CD8-positive, alpha-beta T cell (primary cell): ENCODE measurements at regions of chr12 and their contacts with region 1.

Region 1: DNA sequence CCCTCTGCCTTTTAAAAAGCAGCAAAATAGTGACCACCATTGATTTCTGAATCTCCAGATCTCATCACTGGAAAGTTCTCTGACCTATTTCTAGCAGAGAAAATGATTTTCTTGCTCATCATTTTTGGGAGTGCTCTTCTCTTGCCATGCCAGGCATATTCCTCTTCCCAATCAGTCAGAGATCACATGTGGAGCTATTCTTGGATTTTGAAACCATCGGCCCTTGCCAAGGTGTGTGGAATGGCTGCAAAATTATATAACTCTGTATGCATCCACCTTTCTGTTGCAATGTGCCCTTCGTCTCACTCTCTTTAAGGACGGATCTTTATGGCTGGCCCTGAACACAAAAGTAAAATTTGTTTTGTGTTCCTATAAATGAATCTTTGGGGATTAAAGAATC is 25.5 kb upstream of the LDHB start:
- DNase-seq: no peak
- ATAC-seq: no peak
- H3K4me3 ChIP-seq: no peak overlapping the region
- H3K4me3 Mint-ChIP-seq: no peak overlapping the region
- H3K27ac ChIP-seq: no peak overlapping the region
- H3K27ac Mint-ChIP-seq: no peak overlapping the region
- H3K4me1 ChIP-seq: peaks cover 22% of the 10 kb centered on the region
- H3K4me1 Mint-ChIP-seq: peaks cover 23% of the 10 kb centered on the region
- H3K27me3 ChIP-seq: no peaks in the 10 kb centered on the region
- H3K27me3 Mint-ChIP-seq: peaks cover 2% of the 10 kb centered on the region
- CTCF ChIP-seq: no peak

Region 2: GRCh38 chr12:21248679-21249078 is 434.4 kb before region 1 on chr12:
- CTCF ChIA-PET with region 1: no interaction called
- POLR2A ChIA-PET with region 1: no interaction called
- intact Hi-C with region 1: loop called (anchors 2 to 5 kb)
- DNase-seq: peak in 1 of 9 experiments; percentile 2
- ATAC-seq: no peak
- H3K4me3 ChIP-seq: no peak overlapping the region
- H3K4me3 Mint-ChIP-seq: no peak overlapping the region
- H3K27ac ChIP-seq: no peak overlapping the region
- H3K27ac Mint-ChIP-seq: no peak overlapping the region
- H3K4me1 ChIP-seq: no peaks in the 10 kb centered on the region
- H3K4me1 Mint-ChIP-seq: no peaks in the 10 kb centered on the region
- H3K27me3 ChIP-seq: no peaks in the 10 kb centered on the region
- H3K27me3 Mint-ChIP-seq: no peaks in the 10 kb centered on the region
- CTCF ChIP-seq: peak; percentile 20

Region 3: GRCh38 chr12:21296751-21297406 is 386.2 kb before region 1 on chr12:
- CTCF ChIA-PET with region 1: interaction called, 3 read pairs
- POLR2A ChIA-PET with region 1: no interaction called
- intact Hi-C with region 1: loop called (anchors 1 to 5 kb)
- DNase-seq: peak in 2 of 9 experiments; percentile 10 to 29
- ATAC-seq: no peak
- H3K4me3 ChIP-seq: no peak overlapping the region
- H3K4me3 Mint-ChIP-seq: no peak overlapping the region
- H3K27ac ChIP-seq: no peak overlapping the region
- H3K27ac Mint-ChIP-seq: no peak overlapping the region
- H3K4me1 ChIP-seq: no peaks in the 10 kb centered on the region
- H3K4me1 Mint-ChIP-seq: peaks cover 2% of the 10 kb centered on the region
- H3K27me3 ChIP-seq: no peaks in the 10 kb centered on the region
- H3K27me3 Mint-ChIP-seq: peaks cover 3% of the 10 kb centered on the region
- CTCF ChIP-seq: peak; percentile 71

Region 4: DNA sequence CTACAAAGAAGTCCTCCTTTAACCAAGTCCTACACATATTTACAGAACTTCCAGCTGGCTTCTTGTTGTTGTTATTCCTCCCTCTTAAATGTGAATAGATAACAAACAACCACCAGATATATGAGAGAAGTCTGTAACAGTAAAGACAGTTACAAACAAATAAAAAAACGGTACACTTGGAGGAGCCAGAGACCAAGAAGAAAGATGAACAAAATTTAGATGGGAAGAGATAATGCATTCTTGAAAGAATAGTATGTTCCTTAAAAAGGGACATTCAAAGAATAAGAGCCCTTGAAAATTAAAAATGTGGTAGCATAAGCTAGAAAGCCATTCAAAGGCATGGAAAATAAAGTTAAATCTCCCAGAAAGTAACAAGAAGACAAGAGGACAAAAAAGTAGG is 374.3 kb before region 1 on chr12:
- CTCF ChIA-PET with region 1: no interaction called
- POLR2A ChIA-PET with region 1: no interaction called
- intact Hi-C with region 1: loop called in 1 of 2 experiments (anchors 5 kb)
- DNase-seq: no peak
- ATAC-seq: no peak
- H3K4me3 ChIP-seq: no peak overlapping the region
- H3K4me3 Mint-ChIP-seq: no peak overlapping the region
- H3K27ac ChIP-seq: no peak overlapping the region
- H3K27ac Mint-ChIP-seq: no peak overlapping the region
- H3K4me1 ChIP-seq: no peaks in the 10 kb centered on the region
- H3K4me1 Mint-ChIP-seq: no peaks in the 10 kb centered on the region
- H3K27me3 ChIP-seq: no peaks in the 10 kb centered on the region
- H3K27me3 Mint-ChIP-seq: peaks cover 11% of the 10 kb centered on the region
- CTCF ChIP-seq: no peak